ENCODE measurements at regions of chr5 and their contacts with region 1.

Region 1: GRCh38 chr5:157718519-157718918 is 12.7 kb upstream of the THG1L start:
- DNase-seq: no peak
- H3K4me3 ChIP-seq: no peak overlapping the region
- H3K27ac ChIP-seq: no peak overlapping the region
- H3K4me1 ChIP-seq: no peaks in the 10 kb centered on the region
- H3K27me3 ChIP-seq: no peaks in the 10 kb centered on the region
- CTCF ChIP-seq: peak in 2 of 3 experiments; percentile 45 to 65
- POLR2A ChIP-seq: no peak

Region 2: GRCh38 chr5:157431544-157432200 is 286.8 kb before region 1 on chr5:
- intact Hi-C with region 1: loop called (anchors 5 kb)
- DNase-seq: no peak
- H3K4me3 ChIP-seq: no peak overlapping the region
- H3K27ac ChIP-seq: no peak overlapping the region
- H3K4me1 ChIP-seq: no peaks in the 10 kb centered on the region
- H3K27me3 ChIP-seq: no peaks in the 10 kb centered on the region
- CTCF ChIP-seq: peak in 2 of 3 experiments; percentile 29 to 66
- POLR2A ChIP-seq: no peak

Region 3: DNA sequence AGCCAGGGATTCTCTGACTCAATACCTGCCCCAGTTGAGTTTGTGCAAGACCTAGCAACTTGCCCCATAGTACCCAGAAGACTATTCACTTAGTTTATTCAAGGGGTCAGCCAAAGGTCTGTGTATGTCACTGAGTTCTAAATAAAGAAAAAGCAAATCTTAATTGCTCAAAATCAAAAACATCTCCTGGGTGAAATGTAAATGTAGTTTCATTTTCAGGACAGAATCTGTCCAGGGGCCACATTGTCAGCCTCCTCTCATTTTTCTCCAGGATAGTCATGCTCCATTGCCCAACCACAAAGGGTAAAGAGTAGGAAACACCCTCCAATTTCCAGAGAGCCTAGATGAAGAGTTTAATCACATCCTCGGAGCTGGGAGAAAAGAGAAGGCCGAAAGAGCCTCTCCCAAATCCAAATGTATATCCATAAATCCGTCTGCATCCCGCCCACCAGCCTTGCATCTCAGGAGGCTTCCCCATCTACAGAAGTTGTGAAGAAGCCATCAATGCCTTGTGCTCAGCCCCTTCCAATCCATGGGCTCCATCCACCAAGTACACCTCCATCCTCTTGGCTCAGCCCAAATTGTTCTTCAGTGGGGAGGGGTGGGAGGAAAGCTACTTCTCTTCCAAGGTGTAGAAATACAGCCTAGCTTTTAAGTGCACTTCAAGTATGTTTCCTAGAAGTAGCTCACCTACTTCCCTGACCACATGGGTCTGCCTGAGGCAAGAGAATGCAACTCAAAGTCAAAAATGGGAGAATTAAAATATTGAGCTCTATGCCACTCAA is 169.8 kb before region 1 on chr5:
- intact Hi-C with region 1: no loop called
- DNase-seq: no peak
- H3K4me3 ChIP-seq: no peak overlapping the region
- H3K27ac ChIP-seq: peak overlapping the region; percentile 10
- H3K4me1 ChIP-seq: peaks cover 49% of the 10 kb centered on the region
- H3K27me3 ChIP-seq: no peaks in the 10 kb centered on the region
- CTCF ChIP-seq: no peak
- POLR2A ChIP-seq: no peak

Region 4: DNA sequence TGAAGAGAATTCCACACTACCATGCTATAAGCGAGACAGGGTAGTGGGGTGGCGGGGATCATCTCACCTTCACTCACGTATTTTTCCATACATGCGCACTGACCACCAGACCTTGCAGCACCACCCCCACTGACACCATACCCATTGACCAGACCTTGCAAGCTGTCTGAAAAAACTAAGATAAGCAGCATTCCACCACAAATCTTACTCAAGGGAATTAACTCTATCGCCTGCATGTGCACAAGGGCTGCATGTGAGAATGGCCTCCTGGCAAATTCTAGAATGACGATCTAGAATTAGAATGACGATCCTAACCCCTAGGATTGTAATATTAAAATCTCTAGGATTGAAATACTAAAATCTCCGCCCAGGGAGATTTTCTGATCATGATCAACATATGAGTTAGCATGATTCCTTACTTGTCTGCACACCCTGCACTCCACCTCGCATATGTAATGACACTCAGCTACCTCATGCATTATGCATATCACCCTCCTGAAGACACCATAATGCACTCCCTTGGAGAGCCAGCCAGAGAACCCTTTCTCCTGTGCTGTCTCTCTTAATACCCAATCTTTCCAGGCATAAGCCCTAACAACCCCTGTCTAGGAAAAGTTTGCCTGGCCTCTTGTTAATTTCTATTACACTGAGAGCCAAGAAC is 78.0 kb before region 1 on chr5:
- intact Hi-C with region 1: no loop called
- DNase-seq: no peak
- H3K4me3 ChIP-seq: no peak overlapping the region
- H3K27ac ChIP-seq: no peak overlapping the region
- H3K4me1 ChIP-seq: no peaks in the 10 kb centered on the region
- H3K27me3 ChIP-seq: no peaks in the 10 kb centered on the region
- CTCF ChIP-seq: no peak
- POLR2A ChIP-seq: no peak

Measured in vagina (tissue), 2 donors.